Panc1 (cell line): ENCODE measurements at regions of chr17 and their contacts with region 1.

Region 1: GRCh38 chr17:74892974-74893911 is at the start of gene FADS6:
- DNase-seq: no peak
- ATAC-seq: peak; percentile 41
- H3K4me3 ChIP-seq: peak within 1 kb of the TSS; percentile 39 to 41
- H3K27ac ChIP-seq: no peak within 1 kb of the TSS
- H3K4me1 ChIP-seq: no peaks in the 10 kb centered on the region
- H3K27me3 ChIP-seq: peaks cover 12% of the 10 kb centered on the region
- CTCF ChIP-seq: no peak
- total RNA-seq, gene FADS6: not detected

Region 2: GRCh38 chr17:74715144-74715543 is 178.1 kb before region 1 on chr17:
- CTCF ChIA-PET with region 1: no interaction called
- POLR2A ChIA-PET with region 1: no interaction called
- in situ Hi-C with region 1: no loop called
- intact Hi-C with region 1: no loop called
- DNase-seq: no peak
- ATAC-seq: peak; percentile 74
- H3K4me3 ChIP-seq: no peak overlapping the region
- H3K27ac ChIP-seq: no peak overlapping the region
- H3K4me1 ChIP-seq: no peaks in the 10 kb centered on the region
- H3K27me3 ChIP-seq: 0 out of 2 replicates have a peak, but pooled peaks cover 3% of the 10 kb centered on the region
- CTCF ChIP-seq: no peak

Region 3: DNA sequence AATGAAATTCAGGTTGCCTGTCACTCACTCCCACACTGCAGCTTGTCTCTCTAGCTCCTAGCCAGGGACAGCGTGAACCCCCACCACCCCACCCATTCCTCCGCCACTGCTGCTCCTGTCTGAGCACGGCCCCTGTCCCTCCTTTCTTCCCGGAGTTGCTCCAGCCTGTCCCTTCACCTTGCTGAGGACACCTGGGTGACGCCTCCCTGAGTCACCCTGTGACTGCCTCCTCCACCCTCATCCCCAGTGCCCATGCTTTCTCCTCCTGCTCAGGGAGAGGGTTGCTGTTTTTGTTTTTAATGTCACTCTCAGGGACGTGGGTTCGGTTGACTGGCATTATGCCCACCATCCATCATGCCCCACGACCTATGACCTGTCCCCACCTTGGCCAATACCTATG is 91.3 kb before region 1 on chr17:
- CTCF ChIA-PET with region 1: interaction called, 12 read pairs
- POLR2A ChIA-PET with region 1: no interaction called
- in situ Hi-C with region 1: no loop called
- intact Hi-C with region 1: no loop called
- DNase-seq: no peak
- ATAC-seq: no peak
- H3K4me3 ChIP-seq: no peak overlapping the region
- H3K27ac ChIP-seq: no peak overlapping the region
- H3K4me1 ChIP-seq: no peaks in the 10 kb centered on the region; the same call in 1 of the 2 replicates
- H3K27me3 ChIP-seq: no peaks in the 10 kb centered on the region
- CTCF ChIP-seq: no peak

Region 4: DNA sequence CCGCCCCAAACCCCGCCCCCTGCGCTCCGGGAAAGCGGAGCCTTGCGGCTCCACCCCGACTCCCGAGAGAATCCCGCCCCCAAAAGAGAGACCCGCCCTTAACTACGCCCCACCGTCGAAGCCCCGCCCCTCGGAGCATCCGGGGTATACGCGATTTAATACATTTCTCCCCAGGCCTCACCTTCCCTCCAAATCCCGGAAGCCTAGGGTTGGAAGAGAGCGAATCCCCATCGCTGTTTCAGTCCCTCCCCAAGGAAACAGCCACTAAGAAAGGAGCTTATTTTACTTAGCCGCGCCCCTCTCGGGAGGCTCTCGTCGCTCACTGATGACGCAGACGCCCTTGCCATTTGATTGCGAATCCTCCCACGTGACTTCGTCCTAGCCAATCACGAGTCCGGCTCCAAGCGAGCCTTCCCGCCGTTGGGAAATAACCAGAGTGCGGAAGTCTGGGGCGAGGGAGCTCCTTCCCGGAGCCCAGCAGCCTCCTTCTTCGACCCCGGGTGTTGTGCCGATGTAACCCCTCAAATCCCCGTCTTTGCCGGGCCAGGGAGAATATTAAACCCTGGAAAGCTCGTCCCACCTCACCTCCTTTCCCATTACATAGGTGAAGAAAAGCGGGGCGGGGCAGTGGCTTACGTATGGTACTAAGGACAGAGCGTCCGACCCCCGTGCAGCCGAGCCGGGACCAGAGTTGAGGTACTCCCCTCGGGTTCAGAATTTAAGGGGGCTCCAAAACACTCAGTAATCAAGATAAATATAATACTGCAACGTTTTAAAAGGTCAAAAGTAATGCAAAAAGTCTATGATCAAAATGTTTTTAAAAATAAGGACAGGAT is 20.0 kb before region 1 on chr17:
- CTCF ChIA-PET with region 1: interaction called, 3 read pairs
- POLR2A ChIA-PET with region 1: interaction called, 10 read pairs
- in situ Hi-C with region 1: no loop called
- intact Hi-C with region 1: no loop called
- DNase-seq: peak; percentile 98
- ATAC-seq: peak; percentile 97
- H3K4me3 ChIP-seq: peak overlapping the region; percentile 83 to 86
- H3K27ac ChIP-seq: peak overlapping the region; percentile 97
- H3K4me1 ChIP-seq: peaks cover 9% of the 10 kb centered on the region
- H3K27me3 ChIP-seq: no peaks in the 10 kb centered on the region
- CTCF ChIP-seq: no peak

Region 5: GRCh38 chr17:74935585-74936469 is 42.6 kb after region 1 on chr17 and contains the start of gene OTOP3:
- CTCF ChIA-PET with region 1: no interaction called
- POLR2A ChIA-PET with region 1: interaction called, 15 read pairs
- in situ Hi-C with region 1: no loop called
- intact Hi-C with region 1: no loop called
- DNase-seq: no peak
- ATAC-seq: peak; percentile 60
- H3K4me3 ChIP-seq: no peak within 1 kb of the TSS
- H3K27ac ChIP-seq: no peak within 1 kb of the TSS
- H3K4me1 ChIP-seq: no peaks in the 10 kb centered on the region
- H3K27me3 ChIP-seq: peaks cover 13% of the 10 kb centered on the region; the same call in 1 of the 2 replicates
- CTCF ChIP-seq: no peak
- total RNA-seq, gene OTOP3: not detected

Region 6: DNA sequence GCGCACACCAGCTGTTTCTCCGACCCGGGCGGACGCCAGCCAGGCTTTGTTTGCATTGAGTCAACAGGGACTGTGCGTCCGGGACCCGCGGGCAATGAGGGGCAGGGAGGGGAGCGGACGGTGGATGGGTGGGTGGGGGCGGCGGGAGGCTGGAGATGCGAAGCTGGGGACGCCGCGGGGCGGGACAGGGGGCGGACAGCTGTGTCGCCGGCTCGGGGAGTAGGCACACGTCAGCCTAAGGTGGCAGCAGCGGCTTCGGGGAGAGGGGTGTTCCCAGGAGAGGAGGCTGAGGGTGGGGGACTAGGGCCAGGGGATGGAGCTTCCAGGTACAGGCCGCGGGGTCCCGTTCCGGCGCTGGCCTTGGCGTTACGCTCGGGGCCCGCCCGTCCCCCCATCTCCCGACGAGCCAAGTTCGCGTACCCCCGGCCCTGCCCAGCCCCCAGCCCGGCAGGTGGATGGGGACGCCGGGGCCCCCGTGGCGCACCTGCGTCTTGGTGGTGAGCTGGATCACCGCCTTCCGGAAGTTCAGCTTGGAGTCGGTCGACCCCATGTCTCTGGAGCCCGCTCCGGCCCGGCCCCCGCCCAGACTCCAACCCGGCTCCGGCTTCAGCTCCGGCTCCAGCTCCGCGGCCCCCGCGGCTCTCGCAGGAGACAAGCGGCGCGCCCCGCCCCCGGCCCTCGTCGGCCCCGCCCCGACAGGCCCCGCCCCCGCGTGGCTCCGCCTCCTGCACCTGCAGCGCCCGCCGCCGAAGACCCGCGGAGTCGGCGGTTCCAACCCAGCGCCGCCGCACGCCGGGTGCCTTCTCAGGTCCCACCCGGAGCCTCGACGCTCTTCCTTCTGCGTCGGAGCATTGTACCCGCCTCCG is 79.1 kb after region 1 on chr17 and contains the start of gene HID1:
- CTCF ChIA-PET with region 1: no interaction called
- POLR2A ChIA-PET with region 1: interaction called, 10 read pairs
- in situ Hi-C with region 1: no loop called
- intact Hi-C with region 1: no loop called
- DNase-seq: no peak
- ATAC-seq: peak; percentile 87
- H3K4me3 ChIP-seq: peak within 1 kb of the TSS; percentile 52 to 58
- H3K27ac ChIP-seq: no peak within 1 kb of the TSS
- H3K4me1 ChIP-seq: peaks cover 4% of the 10 kb centered on the region; the same call in 1 of the 2 replicates
- H3K27me3 ChIP-seq: no peaks in the 10 kb centered on the region
- CTCF ChIP-seq: no peak
- total RNA-seq, gene HID1: 10.9 TPM